Activated CD8-positive, alpha-beta T cell treated with anti-CD3 and anti-CD28 coated beads for 36 hours (primary cell): ENCODE measurements at regions of chr4 and their contacts with region 1.

Region 1: DNA sequence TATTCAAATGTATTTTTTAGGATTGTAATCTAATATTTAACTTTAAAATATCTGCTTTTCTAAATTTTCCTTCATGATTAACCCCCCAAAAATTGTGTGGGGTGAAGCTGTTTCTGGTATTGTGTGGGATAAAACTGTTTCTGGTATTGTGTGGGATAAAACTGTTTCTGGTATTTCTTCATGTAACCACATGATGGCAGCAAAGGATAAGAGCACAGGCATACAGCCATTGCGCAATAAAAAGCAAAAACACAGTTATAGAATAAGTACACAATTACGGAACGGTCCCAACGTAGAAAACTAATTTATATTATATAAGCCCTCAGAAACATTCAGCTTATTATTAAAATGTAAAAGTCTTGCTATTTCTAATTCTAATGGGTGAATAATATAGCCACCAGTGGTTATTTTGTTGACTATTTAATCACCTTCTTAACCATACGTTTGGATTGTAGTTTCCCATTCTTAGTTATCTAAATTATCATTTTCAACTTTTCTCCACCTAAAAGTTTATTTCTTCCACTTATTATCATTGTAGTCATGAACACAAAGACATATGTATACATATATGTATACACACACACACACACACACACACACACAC is 333.9 kb upstream of the FSTL5 start:
- DNase-seq: peak; percentile 10
- ATAC-seq: peak; percentile 61
- H3K4me3 Mint-ChIP-seq: no peak overlapping the region
- H3K27ac Mint-ChIP-seq: no peak overlapping the region
- H3K4me1 Mint-ChIP-seq: no peaks in the 10 kb centered on the region
- H3K27me3 Mint-ChIP-seq: no peaks in the 10 kb centered on the region
- CTCF ChIP-seq: peak; percentile 83

Region 2: DNA sequence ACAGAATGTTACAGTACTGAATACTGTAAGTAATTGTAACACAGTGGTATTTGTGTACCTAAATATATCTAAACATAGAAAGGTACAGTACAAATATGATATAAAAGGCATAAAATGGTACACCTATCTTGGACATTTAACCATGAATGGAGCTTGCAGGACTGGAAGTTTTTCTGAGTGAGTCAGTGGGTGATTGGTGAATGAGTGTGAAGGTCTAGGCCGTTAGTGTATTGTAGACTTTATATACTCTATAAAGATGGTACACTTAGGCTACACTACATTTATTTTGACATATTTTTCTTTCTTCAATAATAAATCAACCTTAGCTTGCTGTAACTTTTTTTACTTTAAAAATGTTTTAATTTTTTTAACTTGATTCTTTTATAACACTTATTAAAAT is 88.6 kb after region 1 on chr4:
- CTCF ChIA-PET with region 1: no interaction called
- POLR2A ChIA-PET with region 1: no interaction called
- intact Hi-C with region 1: no loop called
- DNase-seq: no peak
- ATAC-seq: no peak
- H3K4me3 Mint-ChIP-seq: no peak overlapping the region
- H3K27ac Mint-ChIP-seq: no peak overlapping the region
- H3K4me1 Mint-ChIP-seq: no peaks in the 10 kb centered on the region
- H3K27me3 Mint-ChIP-seq: no peaks in the 10 kb centered on the region
- CTCF ChIP-seq: no peak

Region 3: GRCh38 chr4:163042306-163042705 is 544.6 kb after region 1 on chr4:
- CTCF ChIA-PET with region 1: interaction called, 3 read pairs
- POLR2A ChIA-PET with region 1: no interaction called
- intact Hi-C with region 1: loop called (anchors 5 kb)
- DNase-seq: no peak
- ATAC-seq: no peak
- H3K4me3 Mint-ChIP-seq: no peak overlapping the region
- H3K27ac Mint-ChIP-seq: no peak overlapping the region
- H3K4me1 Mint-ChIP-seq: no peaks in the 10 kb centered on the region
- H3K27me3 Mint-ChIP-seq: peaks cover 4% of the 10 kb centered on the region
- CTCF ChIP-seq: no peak